AG04449 (cell line): ENCODE measurements at regions of chr6 and their contacts with region 1.

Region 1: DNA sequence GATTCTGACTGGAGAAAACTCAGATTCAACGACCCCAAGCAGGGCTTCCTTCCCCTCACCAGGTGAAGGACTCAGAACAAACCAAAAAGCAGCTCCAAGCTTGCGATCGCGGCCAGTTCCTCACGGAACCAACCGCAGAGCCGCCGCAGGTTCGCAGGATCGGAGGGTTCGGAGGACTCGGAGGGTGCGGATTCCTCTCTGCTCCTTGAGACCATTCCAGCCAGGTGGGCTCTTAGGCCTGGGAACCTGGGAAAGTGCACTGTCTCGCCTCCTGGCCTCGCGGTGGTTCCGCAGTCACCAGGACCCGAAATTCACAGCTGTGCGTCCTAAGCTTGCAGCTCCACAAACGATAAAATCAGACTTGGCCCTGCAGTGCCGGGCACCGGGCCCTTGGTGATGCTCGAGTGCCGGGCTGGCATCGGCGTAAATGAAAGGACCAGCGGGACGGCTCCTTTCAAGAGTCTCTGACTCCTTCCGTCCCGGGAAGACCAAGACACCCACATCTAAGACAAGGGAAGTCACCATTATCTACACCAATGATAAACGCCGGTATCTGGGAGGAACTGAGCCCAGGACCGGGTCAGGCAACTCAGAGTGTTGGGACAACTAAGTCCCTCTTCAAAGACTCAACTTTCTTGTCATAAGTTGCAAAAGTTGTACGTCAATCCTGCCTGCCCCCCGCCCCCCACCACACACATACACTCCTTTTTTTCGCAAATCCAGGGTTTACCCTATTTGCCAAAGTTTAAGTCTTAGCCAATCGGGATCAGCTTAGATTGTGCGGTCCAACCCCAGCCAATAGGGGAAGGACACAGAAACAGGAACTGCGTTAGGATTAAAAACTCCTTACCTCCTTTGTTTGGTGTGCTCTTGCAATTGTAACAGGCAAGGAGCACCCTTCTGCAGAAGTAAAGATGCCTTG is 69.8 kb upstream of the PRSS16 start:
- DNase-seq: peak; percentile 73
- H3K4me3 ChIP-seq: peak overlapping the region; percentile 100
- CTCF ChIP-seq: peak; percentile 42

Region 2: GRCh38 chr6:27157459-27158315 is 20.1 kb before region 1 on chr6:
- CTCF ChIA-PET with region 1: interaction called, 53 read pairs
- POLR2A ChIA-PET with region 1: no interaction called
- DNase-seq: peak; percentile 40
- H3K4me3 ChIP-seq: peak overlapping the region; percentile 59
- CTCF ChIP-seq: peak; percentile 50

Region 3: GRCh38 chr6:27188885-27189418 is 11.2 kb after region 1 on chr6:
- CTCF ChIA-PET with region 1: interaction called, 16 read pairs
- POLR2A ChIA-PET with region 1: interaction called, 7 read pairs
- DNase-seq: peak; percentile 24
- H3K4me3 ChIP-seq: peak overlapping the region; percentile 75
- CTCF ChIP-seq: peak; percentile 51